Right ventricle myocardium superior (tissue), 1 donor: ENCODE measurements at regions of chr16 and their contacts with region 1.

Region 1: GRCh38 chr16:75198135-75198600 is 8.8 kb downstream of the CTRB2 start:
- DNase-seq: no peak
- ATAC-seq: peak; percentile 13

Region 2: DNA sequence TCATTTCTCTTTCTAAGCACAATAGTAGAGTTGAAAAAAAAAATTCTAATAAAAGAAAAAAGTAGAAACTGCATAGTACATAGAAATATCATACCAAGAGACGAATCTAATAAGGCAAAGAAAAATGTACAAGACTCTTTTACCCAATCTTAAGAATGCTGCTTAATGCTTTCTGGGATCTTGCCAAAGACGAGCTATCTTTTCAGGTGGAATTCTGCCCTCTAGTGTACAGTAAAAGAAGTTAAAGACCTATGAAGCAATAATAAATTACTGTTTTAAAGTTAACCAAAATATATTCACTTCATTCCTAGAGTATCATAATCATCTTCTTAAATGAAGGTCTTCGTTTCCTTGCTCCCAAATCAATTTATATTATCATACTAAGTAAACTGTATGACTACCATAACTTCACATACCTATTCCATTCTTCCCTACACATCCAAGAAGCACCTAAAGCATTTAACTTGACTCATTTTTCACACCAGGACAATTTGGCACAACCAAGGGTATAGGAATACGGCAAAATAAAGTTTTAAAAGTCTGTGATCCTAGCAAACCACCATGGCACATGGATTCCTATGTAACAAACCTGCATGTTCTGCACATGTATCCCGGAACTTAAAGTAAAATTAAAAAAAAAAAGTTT is 187.5 kb after region 1 on chr16:
- intact Hi-C with region 1: loop called (anchors 5 kb)
- DNase-seq: no peak
- ATAC-seq: peak; percentile 22

Region 3: DNA sequence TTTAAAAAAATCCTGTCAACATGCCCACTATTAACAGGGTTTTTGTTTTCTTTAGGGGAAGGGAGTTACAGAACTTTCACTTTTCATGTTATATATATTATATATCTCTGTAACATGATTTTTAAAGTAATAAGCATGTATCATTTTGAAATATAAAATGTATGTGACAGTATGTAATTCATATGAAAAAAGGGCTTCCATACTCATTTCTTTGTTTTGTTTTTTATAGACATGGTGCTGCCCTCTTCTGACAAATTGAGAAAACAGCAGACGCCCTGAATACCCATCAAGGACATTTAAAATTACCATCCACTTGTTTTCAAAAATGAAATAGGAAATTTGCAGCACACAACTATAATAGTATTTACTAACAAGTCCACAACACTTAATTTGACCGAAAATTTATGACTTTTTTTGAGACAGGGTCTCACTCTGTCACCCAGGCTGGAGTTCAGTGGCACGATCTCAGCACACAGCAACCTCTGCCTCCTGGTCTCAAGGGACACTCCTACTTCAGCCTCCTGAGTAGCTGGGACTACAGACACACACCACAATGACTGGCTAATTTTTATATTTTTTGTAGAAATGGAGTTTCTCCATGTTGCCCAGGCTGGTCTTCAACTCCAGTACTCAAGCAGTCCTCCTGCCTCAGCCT is 204.8 kb after region 1 on chr16:
- intact Hi-C with region 1: loop called (anchors 5 kb)
- DNase-seq: no peak
- ATAC-seq: peak; percentile 53

Region 4: DNA sequence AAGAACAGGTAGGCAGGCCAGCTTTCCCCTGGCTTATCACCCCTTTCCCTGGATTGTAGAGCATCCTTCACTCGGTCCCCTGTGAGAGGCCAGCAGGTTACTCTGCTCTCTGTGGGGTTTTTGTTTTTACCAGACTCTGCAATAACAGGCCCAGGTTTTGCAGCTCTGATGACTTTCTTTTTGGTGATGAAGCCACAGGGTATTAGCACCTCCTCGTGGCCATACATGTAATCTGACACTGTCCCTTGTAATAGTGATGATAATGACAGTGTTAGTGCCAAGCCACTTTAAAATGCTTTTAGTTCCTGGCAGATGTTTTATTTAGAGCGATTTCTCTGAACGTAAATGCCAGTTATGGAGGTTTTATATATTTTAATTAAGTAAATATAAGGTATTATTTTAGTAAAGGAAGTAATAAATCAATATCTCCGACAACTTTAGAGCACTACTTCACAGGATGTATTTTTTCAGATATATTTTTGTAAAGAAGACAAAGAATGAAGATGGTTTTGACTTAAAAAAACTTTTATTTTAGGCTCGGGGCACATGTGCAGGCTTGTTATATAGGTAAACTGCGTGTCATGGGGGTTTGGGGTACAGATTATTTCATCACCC is 566.1 kb after region 1 on chr16:
- intact Hi-C with region 1: loop called (anchors 10 kb)
- DNase-seq: no peak
- ATAC-seq: peak; percentile 87